Posterior vena cava (tissue), 2 donors: ENCODE measurements at regions of chr2 and their contacts with region 1.

Region 1: GRCh38 chr2:189439342-189439741 is 1.9 kb upstream of the WDR75 start:
- DNase-seq: no peak

Region 2: GRCh38 chr2:189483998-189484740 is 44.8 kb after region 1 on chr2:
- intact Hi-C with region 1: no loop called
- DNase-seq: no peak

Region 3: GRCh38 chr2:190468814-190469569 is 1029.7 kb after region 1 on chr2:
- intact Hi-C with region 1: loop called in 1 of 2 experiments (anchors 5 kb)
- DNase-seq: peak; percentile 84